Left cardiac atrium (tissue), 4 donors: ENCODE measurements at regions of chr9 and their contacts with region 1.

Region 1: GRCh38 chr9:100598641-100599145 is 20.8 kb downstream of the CAVIN4 start:
- DNase-seq: peak; percentile 89
- ATAC-seq: peak; percentile 85 to 89

Region 2: DNA sequence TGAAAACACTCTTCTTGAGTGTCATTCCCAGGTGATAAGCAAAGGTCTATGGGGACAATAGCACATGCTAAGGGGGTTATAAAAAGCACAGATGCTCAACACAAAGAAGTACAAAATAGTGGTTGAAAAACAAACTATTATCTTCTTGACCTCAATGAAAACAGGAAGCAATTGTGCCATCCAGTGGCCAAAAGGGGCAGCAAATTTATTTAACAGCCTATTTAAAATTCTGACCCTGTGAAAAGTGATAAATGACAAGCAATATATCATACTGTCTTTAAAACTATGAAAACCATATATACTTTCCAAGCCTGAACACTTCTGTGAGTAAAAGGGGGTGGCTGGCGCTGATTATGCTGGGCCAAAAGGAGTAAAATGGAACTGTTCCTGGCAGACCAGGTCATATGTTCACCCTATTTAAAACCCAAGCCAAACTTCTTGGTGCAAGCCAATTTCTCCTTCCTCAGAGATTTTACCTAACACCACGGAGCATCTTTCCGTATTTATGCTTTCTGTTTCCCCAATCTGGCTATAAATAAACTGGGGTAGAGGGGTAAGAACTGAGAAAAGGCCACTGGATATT is 275.6 kb before region 1 on chr9:
- intact Hi-C with region 1: loop called in 1 of 2 experiments (anchors 5 kb)
- DNase-seq: no peak
- ATAC-seq: no peak

Region 3: GRCh38 chr9:100352727-100353505 is 245.8 kb before region 1 on chr9 and contains the start of gene TEX10:
- intact Hi-C with region 1: loop called in 1 of 2 experiments (anchors 10 kb)
- DNase-seq: peak; percentile 92
- ATAC-seq: peak; percentile 98 to 99
- total RNA-seq, gene TEX10: 7.9 to 11.6 TPM

Region 4: DNA sequence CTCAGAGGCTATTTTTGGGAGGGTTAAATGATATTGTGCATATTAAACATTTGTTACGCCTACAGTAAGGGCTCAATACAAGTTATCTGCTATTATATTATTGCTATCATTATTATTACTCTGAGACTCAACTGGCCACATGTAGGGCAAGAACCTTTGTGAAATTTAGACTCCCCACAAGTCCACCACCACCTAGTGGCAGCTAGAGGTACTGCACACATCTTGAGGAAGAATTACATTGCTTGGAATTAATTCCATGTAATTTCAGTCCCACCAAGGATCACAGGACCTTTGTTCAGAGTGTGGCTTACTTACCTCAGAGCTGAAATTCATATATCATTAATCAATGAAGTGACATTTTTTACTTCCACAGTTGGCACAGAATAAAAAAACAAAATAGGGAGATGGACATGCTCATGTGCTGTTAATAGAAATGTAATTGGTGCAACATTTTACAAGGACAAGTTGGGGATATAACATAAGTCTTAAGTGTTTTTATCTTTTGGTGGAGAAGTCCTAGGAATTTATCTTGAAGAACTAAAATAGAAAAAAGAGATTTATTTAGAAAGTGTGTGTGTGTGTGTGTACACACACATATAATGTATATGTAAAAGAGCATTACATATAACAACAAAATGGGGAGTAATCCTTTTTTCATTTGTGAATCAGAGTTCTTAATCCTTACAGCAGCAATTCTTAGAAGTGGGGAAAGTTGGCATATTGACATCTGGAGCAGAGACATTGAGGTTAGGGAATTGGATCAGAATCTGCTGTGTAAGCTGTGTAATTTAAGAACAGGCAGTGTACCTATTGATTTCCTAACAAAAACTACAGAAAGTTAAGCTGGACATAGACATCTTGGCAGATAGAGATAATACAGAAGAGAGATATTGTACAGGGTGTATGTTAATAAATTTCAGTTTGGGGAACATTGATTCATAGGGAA is 160.6 kb before region 1 on chr9:
- intact Hi-C with region 1: loop called in 1 of 2 experiments (anchors 5 kb)
- DNase-seq: peak; percentile 72
- ATAC-seq: peak; percentile 47 to 70

Region 5: DNA sequence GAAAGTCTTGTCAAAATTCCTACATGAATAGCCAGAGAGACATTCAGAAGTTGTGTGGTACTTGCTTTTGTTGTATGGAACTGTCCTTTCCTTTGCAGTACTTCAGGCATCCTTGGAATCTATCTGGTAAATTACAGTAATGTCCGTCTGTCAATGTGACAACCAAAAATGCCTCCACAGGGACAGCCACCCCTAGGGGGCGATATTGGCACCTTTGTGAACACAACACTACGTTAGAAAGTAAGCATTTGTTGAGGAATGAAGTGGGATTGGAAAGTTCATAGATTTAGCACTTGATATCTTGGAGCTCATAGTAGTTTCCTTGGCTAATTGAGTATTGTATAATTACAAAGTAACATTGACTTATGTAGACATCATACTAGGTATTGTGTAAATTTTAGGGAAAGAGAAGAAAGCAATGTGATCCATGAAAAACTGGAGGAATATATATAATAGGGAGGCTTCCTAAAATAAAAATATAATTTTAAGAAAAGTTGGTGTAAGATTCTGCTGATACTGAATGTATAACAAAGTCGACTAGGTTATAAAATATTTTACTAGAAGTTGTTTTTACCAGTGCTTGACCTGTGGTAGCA is 93.0 kb before region 1 on chr9:
- intact Hi-C with region 1: loop called in 1 of 2 experiments (anchors 5 kb)
- DNase-seq: peak; percentile 62
- ATAC-seq: peak in 1 of 2 donors; percentile 49

Region 6: DNA sequence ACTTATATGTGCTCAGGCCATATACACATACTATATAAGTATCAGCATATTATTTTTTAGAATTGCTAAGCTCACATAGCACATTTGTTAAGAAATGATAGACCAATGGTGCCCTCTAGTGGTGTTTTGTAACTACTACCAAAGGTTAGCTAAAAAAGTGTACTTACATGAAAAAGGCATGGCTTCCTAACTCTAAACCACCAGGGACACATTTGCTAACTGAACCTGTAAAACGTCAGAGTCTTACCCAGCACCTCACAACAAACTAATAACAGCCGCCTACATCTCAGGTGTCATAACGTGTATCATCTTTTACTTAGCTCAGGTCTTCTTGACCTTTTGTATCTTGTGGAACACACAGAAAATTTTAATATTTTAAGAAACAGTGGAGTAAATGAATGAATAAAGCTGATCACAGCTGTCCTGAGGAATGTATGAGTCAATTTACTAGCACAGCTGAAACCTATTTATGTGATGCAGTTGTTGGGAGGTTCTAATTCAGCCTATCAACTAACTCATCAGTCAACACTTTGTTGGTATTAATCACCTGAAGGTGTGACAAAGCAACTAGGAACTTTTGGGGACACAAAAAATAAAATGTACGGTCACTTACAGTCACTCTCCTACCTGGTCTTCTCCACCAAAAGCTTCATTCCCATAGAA is 713.2 kb after region 1 on chr9:
- intact Hi-C with region 1: loop called (anchors 2 to 10 kb)
- DNase-seq: no peak
- ATAC-seq: peak in 1 of 2 donors; percentile 22